Vagina (tissue), 2 donors: ENCODE measurements at regions of chr9 and their contacts with region 1.

Region 1: DNA sequence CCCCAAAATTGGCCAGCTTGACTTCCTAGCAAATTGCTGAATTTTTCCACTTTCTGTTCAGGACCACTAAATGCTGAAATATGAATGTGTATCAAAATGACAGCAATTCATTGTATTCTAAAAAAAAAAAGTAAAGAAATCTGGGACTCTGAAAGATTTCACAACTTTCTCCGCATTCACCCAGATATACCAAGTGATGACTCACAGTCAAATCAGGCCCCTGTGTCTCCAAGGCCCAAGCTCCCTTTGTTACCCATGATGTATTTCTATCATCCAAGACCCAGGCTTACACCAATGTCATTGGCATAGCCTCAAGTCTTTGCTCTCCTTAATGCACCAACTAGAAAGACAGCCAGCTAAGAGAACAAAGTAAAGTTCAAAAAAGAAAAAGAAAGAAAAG is 493.9 kb downstream of the NTRK2 start:
- DNase-seq: no peak
- H3K4me3 ChIP-seq: no peak overlapping the region
- H3K27ac ChIP-seq: no peak overlapping the region
- H3K4me1 ChIP-seq: no peaks in the 10 kb centered on the region
- H3K27me3 ChIP-seq: no peaks in the 10 kb centered on the region
- CTCF ChIP-seq: no peak
- POLR2A ChIP-seq: no peak

Region 2: DNA sequence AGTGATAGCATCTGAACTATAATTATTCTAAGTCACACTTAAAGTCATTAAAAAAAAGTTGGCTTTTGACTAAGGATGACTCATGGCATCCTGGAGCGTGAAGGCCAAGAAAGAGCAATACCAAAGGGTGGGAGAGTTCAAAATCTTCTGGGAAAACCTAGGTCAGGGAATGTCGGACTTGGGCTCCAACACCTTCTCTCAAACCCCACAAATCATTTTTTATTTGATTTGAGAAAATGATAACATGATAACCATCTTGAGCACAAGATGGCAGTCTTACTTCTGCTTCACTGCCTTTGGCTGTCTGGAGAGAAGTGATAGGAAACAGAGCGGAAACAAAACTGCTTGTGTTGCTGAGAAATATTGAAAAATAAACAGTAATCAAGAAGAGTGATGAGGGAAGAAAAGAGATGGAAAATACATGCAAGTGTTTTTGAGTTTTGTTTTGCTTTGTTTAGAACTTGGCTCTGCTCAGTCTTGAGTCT is 510.8 kb before region 1 on chr9:
- intact Hi-C with region 1: loop called (anchors 10 kb)
- DNase-seq: no peak
- H3K4me3 ChIP-seq: no peak overlapping the region
- H3K27ac ChIP-seq: no peak overlapping the region
- H3K4me1 ChIP-seq: no peaks in the 10 kb centered on the region
- H3K27me3 ChIP-seq: no peaks in the 10 kb centered on the region
- CTCF ChIP-seq: no peak
- POLR2A ChIP-seq: no peak